B cell (primary cell): ENCODE measurements at regions of chr22 and their contacts with region 1.

Region 1: DNA sequence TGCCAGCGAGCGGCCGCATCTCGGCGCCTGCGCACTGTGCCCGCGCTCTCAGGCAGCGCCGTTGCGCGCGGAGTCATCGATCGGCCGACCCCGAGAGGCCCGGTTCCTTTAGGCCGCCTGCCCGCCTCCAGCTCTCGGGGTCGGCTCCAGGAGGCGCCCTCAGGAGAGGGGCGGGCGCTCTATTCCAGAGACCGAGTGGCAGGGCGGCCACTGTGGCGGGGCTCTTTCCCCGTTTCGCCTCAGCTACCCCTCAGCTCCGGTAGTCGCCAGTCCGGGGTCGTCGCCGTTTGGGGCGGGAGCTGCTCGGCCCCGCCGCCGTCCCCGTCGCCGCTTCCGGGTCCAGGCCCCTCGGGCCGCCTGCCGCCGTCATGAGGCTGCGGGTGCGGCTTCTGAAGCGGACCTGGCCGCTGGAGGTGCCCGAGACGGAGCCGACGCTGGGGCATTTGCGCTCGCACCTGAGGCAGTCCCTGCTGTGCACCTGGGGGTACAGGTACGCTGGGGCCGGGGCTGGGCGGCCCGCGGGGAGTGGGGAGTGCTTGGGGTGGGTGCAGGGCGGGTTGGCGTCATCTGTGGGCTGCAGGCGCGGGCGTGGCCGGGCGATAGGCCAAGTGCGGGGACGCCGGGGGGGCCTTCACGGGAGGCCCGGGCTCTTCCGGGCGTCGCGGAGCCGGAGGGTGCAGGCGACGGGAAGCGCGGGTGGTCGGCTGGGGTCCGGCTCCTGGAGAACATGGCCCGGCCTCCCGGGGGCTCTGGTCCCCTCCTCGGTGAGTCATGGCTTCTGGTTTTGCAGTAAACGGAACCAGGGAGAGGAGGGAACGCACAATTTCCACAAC is at the start of gene FBXO7:
- DNase-seq: peak; percentile 94
- ATAC-seq: peak; percentile 83
- H3K4me3 ChIP-seq: peak within 1 kb of the TSS; percentile 61 to 81 (median 72)
- H3K4me3 Mint-ChIP-seq: peak within 1 kb of the TSS; percentile 97
- H3K27ac ChIP-seq: peak within 1 kb of the TSS; percentile 86 to 98
- H3K27ac Mint-ChIP-seq: peak within 1 kb of the TSS; percentile 94
- H3K4me1 ChIP-seq: peaks cover 26 to 32% of the 10 kb centered on the region in 2 donors
- H3K4me1 Mint-ChIP-seq: peaks cover 32% of the 10 kb centered on the region
- H3K27me3 ChIP-seq: no peaks in the 10 kb centered on the region
- H3K27me3 Mint-ChIP-seq: no peaks in the 10 kb centered on the region
- CTCF ChIP-seq: peak; percentile 44
- total RNA-seq, gene FBXO7: 103 and 106 TPM in 2 replicates

Region 2: GRCh38 chr22:31977141-31977841 is 497.6 kb before region 1 on chr22:
- CTCF ChIA-PET with region 1: interaction called, 27 read pairs
- POLR2A ChIA-PET with region 1: interaction called, 3 read pairs
- intact Hi-C with region 1: no loop called
- DNase-seq: peak; percentile 76
- ATAC-seq: peak; percentile 83
- H3K4me3 ChIP-seq: no peak overlapping the region
- H3K4me3 Mint-ChIP-seq: no peak overlapping the region
- H3K27ac ChIP-seq: no peak overlapping the region
- H3K27ac Mint-ChIP-seq: no peak overlapping the region
- H3K4me1 ChIP-seq: peaks cover 7 to 13% of the 10 kb centered on the region in 2 donors
- H3K4me1 Mint-ChIP-seq: peaks cover 12% of the 10 kb centered on the region
- H3K27me3 ChIP-seq: no peaks in the 10 kb centered on the region
- H3K27me3 Mint-ChIP-seq: no peaks in the 10 kb centered on the region
- CTCF ChIP-seq: peak; percentile 77

Region 3: DNA sequence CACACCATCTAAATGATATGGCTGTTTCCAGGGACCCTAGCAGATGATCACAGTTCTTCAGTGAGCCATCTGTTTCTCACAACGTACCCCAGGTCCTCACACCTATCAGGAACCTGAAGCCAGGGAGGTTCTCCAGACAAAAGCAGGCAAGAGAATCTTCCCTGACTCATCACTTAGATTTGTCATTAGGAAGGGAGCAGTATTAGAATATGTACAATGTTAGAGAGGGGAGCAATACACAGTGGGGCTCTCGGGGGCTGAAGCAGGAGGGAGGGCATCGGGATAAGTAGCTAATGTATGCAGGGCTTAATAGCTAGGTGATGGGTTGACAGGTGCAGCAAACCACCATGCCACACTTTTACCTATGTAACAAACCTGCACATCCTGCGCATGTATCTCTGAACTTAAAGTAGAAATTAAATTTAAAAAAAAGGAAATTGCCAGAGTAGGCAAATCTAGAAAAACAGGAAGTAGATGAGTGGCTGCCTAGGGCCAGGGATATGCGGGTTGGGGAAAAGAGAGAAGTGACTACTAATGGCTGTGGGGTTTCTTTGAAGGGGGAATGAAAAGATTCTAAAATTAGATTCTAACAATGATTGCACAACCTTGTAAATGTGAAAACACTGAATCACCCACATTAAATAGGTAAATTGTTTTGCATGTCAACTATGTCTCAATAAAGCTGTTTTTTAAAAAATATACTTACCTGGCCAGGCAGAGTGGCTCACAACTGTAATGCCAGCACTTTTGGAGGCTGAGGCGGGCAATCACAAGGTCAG is 330.2 kb before region 1 on chr22:
- CTCF ChIA-PET with region 1: no interaction called
- POLR2A ChIA-PET with region 1: no interaction called
- intact Hi-C with region 1: loop called (anchors 2 kb)
- DNase-seq: peak; percentile 73
- ATAC-seq: peak; percentile 80
- H3K4me3 ChIP-seq: no peak overlapping the region
- H3K4me3 Mint-ChIP-seq: peak overlapping the region; percentile 1
- H3K27ac ChIP-seq: no peak overlapping the region
- H3K27ac Mint-ChIP-seq: peak overlapping the region; percentile 53
- H3K4me1 ChIP-seq: peaks cover 18 to 19% of the 10 kb centered on the region in 2 donors
- H3K4me1 Mint-ChIP-seq: peaks cover 20% of the 10 kb centered on the region
- H3K27me3 ChIP-seq: no peaks in the 10 kb centered on the region
- H3K27me3 Mint-ChIP-seq: no peaks in the 10 kb centered on the region
- CTCF ChIP-seq: no peak

Region 4: DNA sequence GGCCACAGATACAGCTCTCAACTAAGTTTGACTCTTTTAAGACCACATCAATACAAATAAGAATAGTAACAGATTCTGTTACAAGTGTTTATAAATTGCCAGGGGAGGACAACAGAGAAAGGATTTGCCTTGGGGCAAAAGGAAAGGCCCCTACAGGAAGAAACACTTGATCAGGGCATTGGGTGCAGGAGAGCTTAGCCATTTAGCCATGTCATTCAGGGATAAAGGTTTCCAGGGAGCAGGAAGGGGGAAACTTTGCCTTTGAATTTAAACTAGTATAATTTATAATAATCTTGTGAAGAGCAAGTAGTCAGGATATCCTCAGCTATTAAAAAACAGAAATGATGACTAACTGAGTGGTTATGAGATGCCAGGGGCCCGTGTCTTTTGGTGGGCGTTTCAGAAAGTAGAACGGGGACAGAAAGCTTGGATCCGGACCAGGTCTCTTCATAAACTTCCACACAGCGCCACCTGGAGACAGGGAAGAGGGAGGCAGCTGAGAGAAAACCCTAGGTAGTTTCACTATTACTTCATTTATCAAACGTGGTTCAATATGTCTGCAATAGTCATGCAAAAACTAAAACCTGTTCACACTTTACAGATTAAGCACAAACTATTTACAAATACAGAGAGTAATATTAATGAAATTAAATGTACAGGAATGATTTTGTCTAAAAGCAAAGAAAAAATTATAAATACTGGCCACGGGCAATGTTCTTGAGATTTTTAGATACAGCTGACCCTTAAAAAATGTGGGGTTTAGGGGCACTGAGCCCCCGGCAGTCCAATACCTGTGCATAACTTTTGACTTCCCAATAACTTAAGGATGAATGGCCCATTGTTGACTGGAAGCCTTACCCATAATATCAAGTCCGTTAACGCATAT is 208.7 kb before region 1 on chr22:
- CTCF ChIA-PET with region 1: interaction called, 7 read pairs
- POLR2A ChIA-PET with region 1: no interaction called
- intact Hi-C with region 1: loop called (anchors 2 kb)
- DNase-seq: peak; percentile 62
- ATAC-seq: peak; percentile 36
- H3K4me3 ChIP-seq: no peak overlapping the region
- H3K4me3 Mint-ChIP-seq: no peak overlapping the region
- H3K27ac ChIP-seq: no peak overlapping the region
- H3K27ac Mint-ChIP-seq: no peak overlapping the region
- H3K4me1 ChIP-seq: no peaks in the 10 kb centered on the region
- H3K4me1 Mint-ChIP-seq: peaks cover 3% of the 10 kb centered on the region
- H3K27me3 ChIP-seq: no peaks in the 10 kb centered on the region
- H3K27me3 Mint-ChIP-seq: peaks cover 4% of the 10 kb centered on the region
- CTCF ChIP-seq: peak; percentile 89

Region 5: DNA sequence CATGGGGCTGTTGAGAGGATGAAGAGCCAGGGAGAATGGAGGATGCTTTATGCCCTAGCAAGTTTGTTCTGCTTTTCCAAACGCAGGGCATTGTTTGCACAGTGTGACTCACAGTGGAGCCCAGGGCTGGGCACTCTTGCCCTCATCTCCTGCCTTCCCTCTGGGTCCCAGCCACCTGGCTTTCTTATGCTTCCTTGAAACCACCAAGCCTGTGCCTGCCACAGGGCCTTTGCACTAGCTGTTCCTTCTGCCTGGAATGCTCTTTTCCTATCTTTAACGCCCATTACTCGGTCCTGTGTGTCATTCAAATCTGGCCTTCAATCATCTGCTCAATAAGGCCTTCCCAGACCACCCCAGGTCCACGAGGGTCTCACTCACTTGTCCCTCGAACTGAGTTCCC is 164.1 kb before region 1 on chr22:
- CTCF ChIA-PET with region 1: no interaction called
- POLR2A ChIA-PET with region 1: no interaction called
- intact Hi-C with region 1: no loop called
- DNase-seq: no peak
- ATAC-seq: no peak
- H3K4me3 ChIP-seq: no peak overlapping the region
- H3K4me3 Mint-ChIP-seq: no peak overlapping the region
- H3K27ac ChIP-seq: no peak overlapping the region
- H3K27ac Mint-ChIP-seq: no peak overlapping the region
- H3K4me1 ChIP-seq: no peaks in the 10 kb centered on the region
- H3K4me1 Mint-ChIP-seq: no peaks in the 10 kb centered on the region
- H3K27me3 ChIP-seq: peaks cover 0 to 12% (median 1%) of the 10 kb centered on the region in 4 experiments
- H3K27me3 Mint-ChIP-seq: peaks cover 45% of the 10 kb centered on the region
- CTCF ChIP-seq: no peak

Region 6: DNA sequence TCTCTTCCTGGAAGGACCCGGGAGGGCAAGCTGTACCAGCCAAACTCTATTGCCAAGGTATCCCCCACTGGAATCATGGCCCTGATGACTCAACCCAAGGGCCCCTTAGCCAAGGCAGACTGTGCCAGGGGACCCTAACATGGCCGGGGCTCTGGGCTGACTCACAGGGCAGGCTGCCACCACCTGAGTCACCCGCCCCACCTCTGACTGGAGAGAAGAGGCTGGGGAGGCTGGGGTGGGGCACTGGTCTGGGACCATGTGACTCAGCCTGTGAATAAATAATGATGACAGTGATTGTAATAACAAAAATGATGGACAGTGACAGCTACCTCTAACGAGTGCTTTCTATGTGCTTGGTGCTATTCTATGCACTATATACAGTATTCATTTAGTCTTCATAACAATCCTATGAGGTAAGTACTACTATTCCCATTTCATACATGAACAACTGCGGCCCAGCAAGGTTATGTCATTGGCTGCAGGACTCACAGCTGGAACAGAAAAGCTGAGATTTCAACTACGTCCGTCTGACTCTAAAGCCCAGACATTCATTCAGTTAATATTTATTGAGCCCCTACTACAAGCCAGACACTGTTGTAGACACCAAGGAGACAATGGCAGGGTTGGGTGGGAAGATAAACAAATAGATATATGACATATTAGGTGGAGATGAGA is 84.0 kb after region 1 on chr22:
- CTCF ChIA-PET with region 1: no interaction called
- POLR2A ChIA-PET with region 1: no interaction called
- intact Hi-C with region 1: no loop called
- DNase-seq: no peak
- ATAC-seq: no peak
- H3K4me3 ChIP-seq: no peak overlapping the region
- H3K4me3 Mint-ChIP-seq: no peak overlapping the region
- H3K27ac ChIP-seq: no peak overlapping the region
- H3K27ac Mint-ChIP-seq: no peak overlapping the region
- H3K4me1 ChIP-seq: no peaks in the 10 kb centered on the region
- H3K4me1 Mint-ChIP-seq: no peaks in the 10 kb centered on the region
- H3K27me3 ChIP-seq: no peaks in the 10 kb centered on the region
- H3K27me3 Mint-ChIP-seq: peaks cover 24% of the 10 kb centered on the region
- CTCF ChIP-seq: no peak

Region 7: GRCh38 chr22:33565580-33565995 is 1090.7 kb after region 1 on chr22:
- CTCF ChIA-PET with region 1: no interaction called
- POLR2A ChIA-PET with region 1: no interaction called
- intact Hi-C with region 1: loop called (anchors 10 kb)
- DNase-seq: no peak
- ATAC-seq: no peak
- H3K4me3 ChIP-seq: no peak overlapping the region
- H3K4me3 Mint-ChIP-seq: peak overlapping the region; percentile 18
- H3K27ac ChIP-seq: no peak overlapping the region
- H3K27ac Mint-ChIP-seq: peak overlapping the region; percentile 67
- H3K4me1 ChIP-seq: peaks cover 70 to 73% of the 10 kb centered on the region in 2 donors
- H3K4me1 Mint-ChIP-seq: peaks cover 72% of the 10 kb centered on the region
- H3K27me3 ChIP-seq: no peaks in the 10 kb centered on the region
- H3K27me3 Mint-ChIP-seq: no peaks in the 10 kb centered on the region
- CTCF ChIP-seq: no peak